HepG2 (cell line): ENCODE measurements at regions of chr11 and their contacts with region 1.

Region 1: DNA sequence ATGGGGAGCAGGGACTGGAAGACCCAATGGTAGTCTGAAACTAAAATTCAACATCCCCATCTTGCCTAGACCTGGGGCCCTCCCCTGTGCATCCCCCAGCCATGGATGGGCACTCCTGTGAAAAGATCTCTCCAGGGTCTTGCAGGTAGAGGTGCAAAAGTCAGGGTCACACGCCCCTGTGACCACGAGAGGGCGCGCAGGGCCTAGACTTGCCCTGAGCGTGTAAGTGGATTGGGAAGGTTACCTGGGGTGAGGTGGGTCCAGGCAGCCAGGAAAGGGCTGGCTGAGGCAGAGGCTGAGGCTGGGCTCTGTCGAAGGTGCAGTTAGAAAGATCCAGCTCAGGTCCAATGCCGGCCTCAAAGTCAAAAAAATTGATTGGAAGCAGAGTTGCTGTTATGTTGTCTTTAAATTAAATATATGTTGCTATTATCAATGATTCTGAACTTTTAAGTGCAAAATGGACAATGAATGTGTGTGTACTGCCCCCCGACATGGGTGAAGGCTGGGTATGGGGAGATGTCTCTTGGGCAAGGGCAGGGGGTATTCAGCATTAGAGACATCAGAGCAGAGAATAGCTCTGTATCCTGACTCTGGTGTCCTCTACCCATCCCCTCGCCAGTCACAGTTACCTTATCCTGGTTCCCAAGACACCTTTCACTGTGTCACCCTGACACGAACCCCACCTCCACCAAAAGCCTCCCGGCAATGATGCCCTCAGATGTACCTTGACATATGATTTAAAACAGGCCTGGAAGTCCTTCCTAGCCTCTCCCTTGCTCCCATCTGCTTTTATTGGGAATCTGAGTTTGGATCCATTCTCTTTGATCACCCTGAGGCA is 4.7 kb upstream of the POU2F3 start:
- DNase-seq: peak; percentile 66
- ATAC-seq: peak; percentile 79
- H3K4me3 ChIP-seq: no peak overlapping the region
- H3K27ac ChIP-seq: no peak overlapping the region
- H3K4me1 ChIP-seq: no peaks in the 10 kb centered on the region
- H3K27me3 ChIP-seq: peaks cover 3 to 55% of the 10 kb centered on the region in 2 experiments; a peak in 4 of 5 replicates
- CTCF ChIP-seq: peak; percentile 96
- EP300 ChIP-seq: no peak
- POLR2A ChIP-seq: no peak
- RAD21 ChIP-seq: peak; percentile 84

Region 2: DNA sequence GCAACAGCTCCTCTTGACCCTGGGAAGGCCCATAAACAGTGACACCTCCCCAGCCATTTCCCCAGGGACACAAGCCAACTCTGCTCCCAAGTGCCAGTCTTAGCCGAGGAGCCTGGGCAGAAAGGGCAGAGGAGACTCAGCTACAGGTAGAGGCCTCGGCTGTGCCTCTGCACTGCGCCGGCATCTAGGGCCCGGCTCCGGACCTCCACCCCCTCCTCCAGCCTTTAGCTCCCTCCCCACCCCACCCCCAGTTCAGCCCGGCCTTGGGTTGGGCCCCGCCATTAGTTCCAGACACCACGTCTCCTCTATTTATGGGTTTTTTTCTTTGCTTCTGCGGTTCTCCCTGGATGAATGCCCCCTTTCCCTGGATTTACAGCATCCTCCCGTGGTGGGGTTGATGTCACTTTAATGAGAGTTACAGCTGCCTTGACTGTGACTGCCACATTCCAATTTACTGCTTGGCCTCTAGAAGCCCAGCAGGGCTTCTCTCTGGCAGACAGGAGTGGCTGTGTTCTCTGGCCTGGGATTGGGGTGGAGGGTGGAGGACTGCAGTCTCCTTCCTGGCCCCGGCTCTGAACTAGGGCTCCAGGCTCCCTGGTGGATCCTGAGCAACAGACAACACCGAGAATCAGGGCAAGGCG is 37.9 kb before region 1 on chr11:
- CTCF ChIA-PET with region 1: no interaction called
- POLR2A ChIA-PET with region 1: no interaction called
- in situ Hi-C with region 1: no loop called
- intact Hi-C with region 1: no loop called
- DNase-seq: peak; percentile 66
- ATAC-seq: peak; percentile 63
- H3K4me3 ChIP-seq: peak overlapping the region; percentile 28 to 58 (median 34); a peak in 5 of 6 replicates
- H3K27ac ChIP-seq: peak overlapping the region; percentile 77
- H3K4me1 ChIP-seq: peaks cover 97% of the 10 kb centered on the region
- H3K27me3 ChIP-seq: no peaks in the 10 kb centered on the region
- CTCF ChIP-seq: no peak
- EP300 ChIP-seq: no peak
- POLR2A ChIP-seq: no peak
- RAD21 ChIP-seq: no peak

Region 3: GRCh38 chr11:120295084-120295483 is 59.8 kb after region 1 on chr11:
- CTCF ChIA-PET with region 1: interaction called, 22 read pairs
- POLR2A ChIA-PET with region 1: no interaction called
- in situ Hi-C with region 1: loop called (anchors 5 kb)
- intact Hi-C with region 1: no loop called
- DNase-seq: no peak
- ATAC-seq: no peak
- H3K4me3 ChIP-seq: no peak overlapping the region
- H3K27ac ChIP-seq: no peak overlapping the region
- H3K4me1 ChIP-seq: peaks cover 8% of the 10 kb centered on the region
- H3K27me3 ChIP-seq: peaks cover 4 to 50% of the 10 kb centered on the region in 2 experiments; a peak in 4 of 5 replicates
- CTCF ChIP-seq: no peak
- EP300 ChIP-seq: no peak
- POLR2A ChIP-seq: no peak
- RAD21 ChIP-seq: no peak

Region 4: DNA sequence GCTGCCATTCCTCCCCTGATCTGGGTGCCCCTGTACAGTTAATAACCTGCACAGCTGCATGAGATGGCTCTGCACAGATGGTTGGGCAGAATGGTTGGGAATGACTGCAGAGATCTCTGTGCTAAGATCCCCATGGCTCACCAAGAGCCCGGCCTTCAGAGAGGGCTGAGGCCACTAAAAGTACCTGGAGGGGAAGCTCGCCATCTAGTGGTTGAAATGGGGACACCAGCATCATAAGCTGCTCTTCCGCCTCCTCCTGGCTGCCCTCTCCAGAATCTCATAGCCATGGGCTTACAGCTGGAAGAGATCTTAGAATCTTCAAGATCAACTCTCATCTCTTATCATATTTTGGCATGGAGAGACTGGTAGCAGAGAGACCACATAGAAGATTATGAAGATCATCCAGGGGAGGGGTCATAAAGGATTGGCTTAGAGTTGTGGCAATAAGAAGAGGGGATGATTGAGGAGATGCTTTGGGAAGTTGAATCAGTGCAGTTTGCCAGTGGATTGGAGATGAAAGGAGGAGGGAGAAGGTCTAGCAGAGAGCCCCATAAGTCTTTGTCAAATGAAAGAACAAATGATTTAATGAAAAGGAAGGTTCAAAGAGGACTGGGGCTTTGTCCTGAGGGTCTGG is 67.9 kb after region 1 on chr11:
- CTCF ChIA-PET with region 1: interaction called, 63 read pairs
- POLR2A ChIA-PET with region 1: no interaction called
- in situ Hi-C with region 1: loop called (anchors 5 kb)
- intact Hi-C with region 1: loop called (anchors 1 kb)
- DNase-seq: peak; percentile 69
- ATAC-seq: peak; percentile 88
- H3K4me3 ChIP-seq: no peak overlapping the region
- H3K27ac ChIP-seq: no peak overlapping the region
- H3K4me1 ChIP-seq: no peaks in the 10 kb centered on the region
- H3K27me3 ChIP-seq: peaks cover 0 to 62% of the 10 kb centered on the region in 2 experiments; a peak in 4 of 5 replicates
- CTCF ChIP-seq: peak; percentile 93
- EP300 ChIP-seq: no peak
- POLR2A ChIP-seq: no peak
- RAD21 ChIP-seq: peak; percentile 74

Region 5: GRCh38 chr11:120385110-120385509 is 149.9 kb after region 1 on chr11:
- CTCF ChIA-PET with region 1: no interaction called
- POLR2A ChIA-PET with region 1: no interaction called
- in situ Hi-C with region 1: no loop called
- intact Hi-C with region 1: no loop called
- DNase-seq: no peak
- ATAC-seq: no peak
- H3K4me3 ChIP-seq: no peak overlapping the region
- H3K27ac ChIP-seq: no peak overlapping the region
- H3K4me1 ChIP-seq: peaks cover 70% of the 10 kb centered on the region
- H3K27me3 ChIP-seq: no peaks in the 10 kb centered on the region
- CTCF ChIP-seq: no peak
- EP300 ChIP-seq: no peak
- POLR2A ChIP-seq: no peak
- RAD21 ChIP-seq: no peak